CD4-positive, alpha-beta T cell (primary cell): ENCODE measurements at regions of chr11 and their contacts with region 1.

Region 1: DNA sequence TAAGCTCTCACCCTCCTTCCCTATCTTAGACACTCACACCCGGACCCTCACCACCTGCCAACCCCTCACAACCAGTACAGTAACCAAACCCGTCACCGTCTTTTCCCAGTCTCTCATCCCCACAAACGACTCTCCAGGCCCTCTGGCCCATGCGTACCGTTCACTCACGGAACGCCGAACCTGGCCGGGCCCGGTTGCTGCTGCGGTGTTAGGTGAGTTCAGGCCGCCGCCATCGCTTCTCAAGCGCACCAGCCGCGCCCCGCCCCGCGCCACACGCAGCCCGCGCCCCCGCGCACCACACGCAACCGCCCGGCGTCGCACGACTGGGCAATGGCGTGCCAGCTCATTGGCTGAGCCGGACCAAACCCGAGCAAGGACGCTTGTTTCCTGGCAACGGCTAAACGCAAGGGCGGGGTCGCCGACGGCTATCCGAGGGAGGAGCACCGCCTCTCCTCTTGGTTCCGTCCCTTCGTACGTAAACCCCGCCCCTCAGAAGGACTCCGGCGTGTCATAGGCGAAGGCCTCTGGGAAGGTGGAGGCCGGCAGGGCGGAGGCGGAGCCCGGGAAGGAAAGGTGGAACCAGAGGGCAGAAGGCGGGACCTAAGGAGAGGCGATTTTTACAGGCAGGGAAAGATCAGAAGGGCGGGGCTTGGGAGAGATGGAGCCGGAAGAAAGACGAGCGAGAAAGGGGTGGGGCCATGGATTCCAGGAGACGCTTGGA is at the start of gene FHIP1B:
- DNase-seq: peak; percentile 97 to 100 (median 99)
- ATAC-seq: peak; percentile 90
- H3K4me3 ChIP-seq: peak within 1 kb of the TSS; percentile 90
- H3K4me3 Mint-ChIP-seq: peak within 1 kb of the TSS; percentile 98
- H3K27ac ChIP-seq: peak within 1 kb of the TSS; percentile 68 to 85
- H3K27ac Mint-ChIP-seq: peak within 1 kb of the TSS; percentile 87
- H3K4me1 ChIP-seq: peaks cover 24% of the 10 kb centered on the region
- H3K4me1 Mint-ChIP-seq: peaks cover 49% of the 10 kb centered on the region
- H3K27me3 ChIP-seq: no peaks in the 10 kb centered on the region
- H3K27me3 Mint-ChIP-seq: no peaks in the 10 kb centered on the region
- CTCF ChIP-seq: no peak
- total RNA-seq, gene FHIP1B: 26.7 to 27.7 TPM

Region 2: DNA sequence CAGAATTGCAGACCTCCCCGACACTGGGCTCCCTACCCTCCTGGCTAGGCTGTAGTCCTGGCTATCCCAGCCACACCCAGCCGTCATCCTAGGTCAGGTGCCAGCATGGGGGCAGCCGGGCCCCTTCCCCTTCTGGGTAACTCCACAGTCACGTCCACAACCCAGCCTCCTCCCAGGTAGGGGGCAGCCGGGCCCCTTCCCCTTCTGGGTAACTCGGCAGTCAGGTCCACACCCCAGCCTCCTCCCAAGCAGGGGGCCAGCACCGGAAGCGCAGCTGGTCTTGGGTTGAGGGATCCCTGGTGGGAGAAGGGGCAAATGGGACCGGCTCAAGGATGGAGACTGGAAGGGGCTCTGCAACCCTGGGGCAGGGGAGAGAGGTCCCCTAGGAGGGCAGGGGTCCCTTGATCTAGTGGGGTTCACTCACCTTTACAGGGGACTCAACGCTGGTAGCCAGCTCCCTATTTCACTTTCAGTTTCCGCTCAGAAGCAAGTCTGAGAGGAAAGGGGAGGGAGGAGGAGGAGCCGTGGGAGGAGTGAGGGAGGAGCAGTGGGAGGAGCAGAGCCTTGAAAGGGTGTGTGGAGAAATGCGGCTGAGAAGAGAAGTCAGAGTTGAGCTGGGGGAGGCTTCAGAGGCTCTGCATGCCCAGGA is 1841.2 kb before region 1 on chr11 and contains the start of gene TRIM21:
- CTCF ChIA-PET with region 1: no interaction called
- POLR2A ChIA-PET with region 1: no interaction called
- intact Hi-C with region 1: loop called in 1 of 2 experiments (anchors 10 kb)
- DNase-seq: peak; percentile 71 to 93 (median 88)
- ATAC-seq: peak; percentile 99
- H3K4me3 ChIP-seq: peak within 1 kb of the TSS; percentile 87
- H3K4me3 Mint-ChIP-seq: peak within 1 kb of the TSS; percentile 84
- H3K27ac ChIP-seq: peak within 1 kb of the TSS; percentile 54 to 68
- H3K27ac Mint-ChIP-seq: peak within 1 kb of the TSS; percentile 79
- H3K4me1 ChIP-seq: peaks cover 13% of the 10 kb centered on the region
- H3K4me1 Mint-ChIP-seq: peaks cover 54% of the 10 kb centered on the region
- H3K27me3 ChIP-seq: peaks cover 3 to 7% of the 10 kb centered on the region in 2 experiments
- H3K27me3 Mint-ChIP-seq: peaks cover 10% of the 10 kb centered on the region
- CTCF ChIP-seq: no peak
- total RNA-seq, gene TRIM21: 21.0 to 23.7 TPM

Region 3: DNA sequence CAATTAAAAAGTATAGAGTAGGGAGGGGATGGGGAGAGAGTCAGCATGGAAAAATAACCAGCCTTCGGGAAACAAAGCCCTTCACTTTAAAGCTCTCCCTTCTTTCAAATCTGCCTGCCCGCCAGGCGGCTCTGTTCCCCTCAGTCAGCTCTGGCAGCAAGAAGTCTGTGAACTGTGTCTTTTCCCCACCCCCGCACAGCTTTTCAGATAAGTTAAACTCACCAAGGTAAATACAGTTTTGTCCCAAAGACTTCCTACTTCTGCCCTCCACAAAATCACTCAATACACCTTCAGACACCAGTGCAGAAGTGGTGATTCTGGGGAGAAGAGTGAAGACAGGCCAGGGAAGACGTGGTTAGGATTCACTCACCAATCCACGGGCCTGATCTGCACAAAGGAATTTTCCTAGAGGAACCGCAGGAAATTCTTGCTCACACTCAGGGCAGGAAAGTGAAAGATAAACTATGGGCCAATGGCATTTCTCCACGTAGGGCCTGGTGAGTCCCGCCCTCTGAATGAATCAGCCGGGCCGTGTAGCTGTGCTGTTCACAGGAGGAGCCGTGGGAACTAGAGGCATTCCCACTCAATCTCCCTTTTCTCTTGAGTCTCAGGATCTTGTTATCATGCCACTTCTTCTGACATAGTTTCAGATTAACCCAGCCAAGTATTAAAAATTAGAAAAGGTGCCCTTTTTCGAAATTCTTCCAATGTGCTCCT is 549.7 kb before region 1 on chr11 and contains the start of gene TRIM5:
- CTCF ChIA-PET with region 1: no interaction called
- POLR2A ChIA-PET with region 1: no interaction called
- intact Hi-C with region 1: loop called (anchors 10 kb)
- DNase-seq: peak; percentile 54 to 92 (median 72)
- ATAC-seq: peak; percentile 84
- H3K4me3 ChIP-seq: peak within 1 kb of the TSS; percentile 72
- H3K4me3 Mint-ChIP-seq: peak within 1 kb of the TSS; percentile 94
- H3K27ac ChIP-seq: peak within 1 kb of the TSS; percentile 89 to 90
- H3K27ac Mint-ChIP-seq: peak within 1 kb of the TSS; percentile 88
- H3K4me1 ChIP-seq: peaks cover 38% of the 10 kb centered on the region
- H3K4me1 Mint-ChIP-seq: peaks cover 70% of the 10 kb centered on the region
- H3K27me3 ChIP-seq: no peaks in the 10 kb centered on the region
- H3K27me3 Mint-ChIP-seq: no peaks in the 10 kb centered on the region
- CTCF ChIP-seq: peak; percentile 76
- total RNA-seq, gene TRIM5: 5.9 to 8.0 TPM

Region 4: GRCh38 chr11:6268820-6269219 is 34.3 kb after region 1 on chr11:
- CTCF ChIA-PET with region 1: no interaction called
- POLR2A ChIA-PET with region 1: no interaction called
- intact Hi-C with region 1: no loop called
- DNase-seq: no peak
- ATAC-seq: no peak
- H3K4me3 ChIP-seq: no peak overlapping the region
- H3K4me3 Mint-ChIP-seq: no peak overlapping the region
- H3K27ac ChIP-seq: no peak overlapping the region
- H3K27ac Mint-ChIP-seq: no peak overlapping the region
- H3K4me1 ChIP-seq: peaks cover 2% of the 10 kb centered on the region
- H3K4me1 Mint-ChIP-seq: no peaks in the 10 kb centered on the region
- H3K27me3 ChIP-seq: peaks cover 14 to 16% of the 10 kb centered on the region in 2 experiments
- H3K27me3 Mint-ChIP-seq: peaks cover 69% of the 10 kb centered on the region
- CTCF ChIP-seq: no peak

Region 5: DNA sequence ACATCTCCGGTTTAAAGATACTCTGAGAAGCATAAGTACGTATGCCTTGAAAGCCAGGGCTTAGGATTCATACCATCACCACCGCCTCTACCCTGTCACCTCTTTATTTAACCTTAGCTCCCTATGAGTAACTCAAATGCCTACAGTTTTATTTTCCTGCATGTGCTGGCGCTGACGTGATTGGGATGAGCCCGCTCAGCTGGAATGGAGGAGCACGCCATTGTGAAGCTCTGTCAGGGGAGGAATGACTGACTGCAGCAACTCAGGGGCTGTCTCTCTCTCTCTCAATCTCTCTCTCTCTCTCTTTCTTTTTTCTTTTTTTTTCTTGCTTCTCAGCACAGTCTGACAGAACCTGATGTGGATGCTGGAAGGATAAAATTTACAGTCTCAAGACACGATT is 73.3 kb after region 1 on chr11:
- CTCF ChIA-PET with region 1: no interaction called
- POLR2A ChIA-PET with region 1: no interaction called
- intact Hi-C with region 1: no loop called
- DNase-seq: no peak
- ATAC-seq: no peak
- H3K4me3 ChIP-seq: no peak overlapping the region
- H3K4me3 Mint-ChIP-seq: no peak overlapping the region
- H3K27ac ChIP-seq: no peak overlapping the region
- H3K27ac Mint-ChIP-seq: no peak overlapping the region
- H3K4me1 ChIP-seq: no peaks in the 10 kb centered on the region
- H3K4me1 Mint-ChIP-seq: no peaks in the 10 kb centered on the region
- H3K27me3 ChIP-seq: peaks cover 0 to 7% of the 10 kb centered on the region in 2 experiments
- H3K27me3 Mint-ChIP-seq: peaks cover 40% of the 10 kb centered on the region
- CTCF ChIP-seq: no peak

Region 6: GRCh38 chr11:6389921-6390724 is 155.6 kb after region 1 on chr11 and contains the start of gene SMPD1:
- CTCF ChIA-PET with region 1: no interaction called
- POLR2A ChIA-PET with region 1: interaction called, 5 read pairs
- intact Hi-C with region 1: loop called in 1 of 2 experiments (anchors 5 kb)
- DNase-seq: peak; percentile 85 to 98 (median 94)
- ATAC-seq: peak; percentile 82
- H3K4me3 ChIP-seq: peak within 1 kb of the TSS; percentile 95
- H3K4me3 Mint-ChIP-seq: peak within 1 kb of the TSS; percentile 90
- H3K27ac ChIP-seq: peak within 1 kb of the TSS; percentile 87 to 93
- H3K27ac Mint-ChIP-seq: peak within 1 kb of the TSS; percentile 93
- H3K4me1 ChIP-seq: peaks cover 54% of the 10 kb centered on the region
- H3K4me1 Mint-ChIP-seq: peaks cover 75% of the 10 kb centered on the region
- H3K27me3 ChIP-seq: no peaks in the 10 kb centered on the region
- H3K27me3 Mint-ChIP-seq: no peaks in the 10 kb centered on the region
- CTCF ChIP-seq: no peak
- total RNA-seq, gene SMPD1: 70.9 to 75.0 TPM

Region 7: DNA sequence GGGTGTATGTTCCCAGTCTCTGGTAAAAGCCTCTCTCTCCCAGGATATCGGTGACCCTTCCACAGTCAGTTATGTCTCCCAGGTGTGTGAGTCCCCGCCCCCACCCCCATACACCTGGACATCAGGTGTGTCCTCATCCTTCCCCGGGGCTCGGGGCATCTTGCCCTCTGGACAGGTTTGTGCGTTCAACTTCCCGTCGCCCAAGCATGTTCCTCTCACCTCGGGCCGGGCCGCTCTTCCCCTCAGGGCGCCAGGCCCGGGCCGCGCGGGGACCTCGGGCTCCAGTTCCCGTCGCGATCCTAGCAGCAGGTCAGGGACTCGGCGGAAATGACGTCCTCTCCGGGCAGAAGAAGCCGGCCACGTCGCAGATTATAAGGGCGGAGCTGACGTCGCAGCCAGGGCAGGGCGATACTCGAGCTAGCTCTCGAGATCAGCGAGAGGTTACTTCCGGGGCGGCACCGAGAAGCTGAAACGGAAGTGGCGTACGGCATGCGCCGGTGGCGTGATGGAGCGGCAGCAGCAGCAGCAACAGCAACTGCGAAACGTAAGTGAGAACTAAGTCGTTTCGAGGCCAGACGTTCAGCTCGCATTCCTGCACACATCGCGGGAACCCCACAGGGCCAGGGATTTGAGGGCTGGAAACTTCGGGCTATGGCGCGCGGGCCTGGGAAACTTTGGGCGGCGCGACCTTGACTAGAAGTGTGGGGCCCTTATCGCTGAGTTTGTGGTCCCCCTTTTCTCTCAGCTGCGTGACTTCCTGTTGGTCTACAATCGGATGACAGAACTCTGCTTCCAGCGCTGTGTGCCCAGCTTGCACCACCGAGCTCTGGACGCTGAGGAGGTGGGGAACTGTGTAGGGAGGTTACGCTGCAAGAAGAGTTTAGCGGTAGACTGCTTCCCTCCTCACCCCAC is 246.7 kb after region 1 on chr11 and contains the starts of genes ARFIP2 and TIMM10B:
- CTCF ChIA-PET with region 1: no interaction called
- POLR2A ChIA-PET with region 1: interaction called, 6 read pairs
- intact Hi-C with region 1: loop called (anchors 2 to 5 kb)
- DNase-seq: peak; percentile 92 to 99 (median 96)
- ATAC-seq: peak; percentile 94
- H3K4me3 ChIP-seq: peak within 1 kb of the TSS; percentile 83
- H3K4me3 Mint-ChIP-seq: peak within 1 kb of the TSS; percentile 98
- H3K27ac ChIP-seq: peak within 1 kb of the TSS; percentile 87 to 95
- H3K27ac Mint-ChIP-seq: peak within 1 kb of the TSS; percentile 99
- H3K4me1 ChIP-seq: peaks cover 39% of the 10 kb centered on the region
- H3K4me1 Mint-ChIP-seq: peaks cover 42% of the 10 kb centered on the region
- H3K27me3 ChIP-seq: no peaks in the 10 kb centered on the region
- H3K27me3 Mint-ChIP-seq: no peaks in the 10 kb centered on the region
- CTCF ChIP-seq: no peak
- total RNA-seq, gene ARFIP2: 78.1 to 80.5 TPM
- total RNA-seq, gene TIMM10B: 68.5 to 68.6 TPM

Region 8: GRCh38 chr11:6682936-6683861 is 448.7 kb after region 1 on chr11 and contains the start of gene MRPL17:
- CTCF ChIA-PET with region 1: no interaction called
- POLR2A ChIA-PET with region 1: no interaction called
- intact Hi-C with region 1: loop called in 1 of 2 experiments (anchors 10 kb)
- DNase-seq: peak; percentile 96 to 100 (median 99)
- ATAC-seq: peak; percentile 94
- H3K4me3 ChIP-seq: peak within 1 kb of the TSS; percentile 75
- H3K4me3 Mint-ChIP-seq: peak within 1 kb of the TSS; percentile 98
- H3K27ac ChIP-seq: peak within 1 kb of the TSS; percentile 76 to 86
- H3K27ac Mint-ChIP-seq: peak within 1 kb of the TSS; percentile 94
- H3K4me1 ChIP-seq: peaks cover 17% of the 10 kb centered on the region
- H3K4me1 Mint-ChIP-seq: peaks cover 43% of the 10 kb centered on the region
- H3K27me3 ChIP-seq: no peaks in the 10 kb centered on the region
- H3K27me3 Mint-ChIP-seq: no peaks in the 10 kb centered on the region
- CTCF ChIP-seq: peak; percentile 78
- total RNA-seq, gene MRPL17: 12.3 to 14.2 TPM